ENCODE measurements at regions of chr5 and their contacts with region 1.

Region 1: GRCh38 chr5:170100066-170100943 is 5.4 kb upstream of the FOXI1 start:
- DNase-seq: peak; percentile 51
- H3K4me3 ChIP-seq: no peak overlapping the region
- CTCF ChIP-seq: peak; percentile 47

Region 2: DNA sequence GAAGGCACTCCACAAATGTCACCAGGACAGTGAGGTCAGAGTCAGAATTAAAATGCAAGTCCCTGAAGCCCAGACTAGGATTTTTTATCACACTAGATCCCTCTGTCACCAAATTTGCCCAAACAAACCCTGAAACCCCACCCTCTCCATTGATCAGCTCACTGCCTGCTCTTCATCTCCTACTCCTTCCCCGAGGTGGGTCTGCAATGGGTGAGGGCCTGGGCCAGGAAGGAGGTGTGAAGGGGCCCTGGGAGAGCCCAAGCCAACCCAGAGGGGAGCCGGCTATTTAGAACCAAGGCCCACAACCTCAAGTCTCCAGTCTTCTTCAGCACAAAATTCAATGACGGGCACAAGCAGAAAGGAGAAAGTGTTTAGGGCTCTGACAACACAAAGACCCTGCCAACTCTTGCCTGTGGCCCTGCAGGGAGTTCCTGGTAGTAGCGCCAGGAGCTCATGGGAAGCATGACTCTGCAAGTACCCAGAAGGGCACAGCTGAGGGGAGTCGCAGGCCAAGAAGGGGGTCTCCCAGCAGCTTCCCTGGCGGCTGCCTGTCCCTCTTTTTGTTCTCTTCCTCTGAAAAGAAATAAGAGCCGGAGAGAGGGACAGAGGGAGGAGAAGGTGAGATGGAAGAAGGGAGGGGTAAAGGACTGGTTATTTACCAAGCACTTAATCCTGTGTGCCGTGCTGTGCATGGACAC is 10.9 kb after region 1 on chr5:
- CTCF ChIA-PET with region 1: interaction called, 45 read pairs
- POLR2A ChIA-PET with region 1: no interaction called
- DNase-seq: no peak
- H3K4me3 ChIP-seq: no peak overlapping the region
- CTCF ChIP-seq: no peak

Region 3: GRCh38 chr5:170166101-170166500 is 65.8 kb after region 1 on chr5:
- CTCF ChIA-PET with region 1: interaction called, 11 read pairs
- POLR2A ChIA-PET with region 1: no interaction called
- DNase-seq: no peak
- H3K4me3 ChIP-seq: no peak overlapping the region
- CTCF ChIP-seq: no peak

Region 4: DNA sequence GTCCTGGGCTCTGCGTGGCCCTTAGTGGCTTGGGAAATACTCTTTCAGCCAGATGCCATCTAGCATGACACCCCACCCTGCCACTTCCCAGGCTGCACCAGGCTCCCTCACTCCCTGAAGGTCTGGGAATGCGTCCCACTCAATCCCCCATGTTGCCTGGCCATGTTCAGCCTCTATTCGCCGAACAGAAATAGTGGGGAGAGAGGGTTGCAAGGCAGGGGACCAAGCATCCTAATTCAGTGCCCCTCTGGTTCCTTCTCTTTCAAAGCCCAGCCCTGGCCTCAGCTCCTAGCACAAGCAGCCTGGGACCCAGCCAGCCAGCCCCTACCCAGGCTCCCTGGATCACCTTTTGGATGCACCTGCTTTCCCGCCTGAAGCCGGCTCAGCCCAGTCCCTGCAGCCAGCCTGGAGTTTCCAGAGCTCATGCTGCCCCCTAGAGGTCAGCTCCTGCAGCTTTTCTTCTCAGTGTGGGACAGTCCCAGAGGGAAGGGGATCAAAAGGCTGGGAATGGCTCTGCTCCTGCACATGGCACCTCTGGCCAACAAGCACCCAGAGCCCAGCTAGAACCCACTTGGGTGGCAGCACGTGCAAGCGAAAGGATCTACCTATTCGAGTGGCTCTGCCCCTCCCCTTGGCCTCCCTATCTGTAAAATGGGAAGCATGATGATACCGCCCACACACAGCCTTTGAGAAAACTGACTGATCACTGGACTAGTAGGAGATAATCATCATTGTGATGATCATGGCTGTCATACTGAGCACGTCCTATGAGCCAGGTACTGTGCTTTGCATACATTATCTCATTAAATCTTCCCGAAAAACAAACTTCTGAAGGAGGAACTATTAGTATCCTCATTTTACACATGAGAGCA is 83.7 kb after region 1 on chr5:
- CTCF ChIA-PET with region 1: interaction called, 257 read pairs
- POLR2A ChIA-PET with region 1: no interaction called
- DNase-seq: no peak
- H3K4me3 ChIP-seq: no peak overlapping the region
- CTCF ChIP-seq: peak; percentile 87

Region 5: GRCh38 chr5:170195961-170196360 is 95.7 kb after region 1 on chr5:
- CTCF ChIA-PET with region 1: interaction called, 30 read pairs
- POLR2A ChIA-PET with region 1: no interaction called
- DNase-seq: no peak
- H3K4me3 ChIP-seq: no peak overlapping the region
- CTCF ChIP-seq: no peak

Region 6: GRCh38 chr5:170225326-170226128 is 125.2 kb after region 1 on chr5:
- CTCF ChIA-PET with region 1: interaction called, 26 read pairs
- POLR2A ChIA-PET with region 1: no interaction called
- DNase-seq: no peak
- H3K4me3 ChIP-seq: no peak overlapping the region
- CTCF ChIP-seq: peak; percentile 66

Region 7: GRCh38 chr5:170451747-170452365 is 351.6 kb after region 1 on chr5:
- CTCF ChIA-PET with region 1: no interaction called
- POLR2A ChIA-PET with region 1: no interaction called
- DNase-seq: no peak
- H3K4me3 ChIP-seq: no peak overlapping the region
- CTCF ChIP-seq: no peak

Measured in AG04449 (cell line).